WTC11 (cell line): ENCODE measurements at regions of chr13 and their contacts with region 1.

Region 1: DNA sequence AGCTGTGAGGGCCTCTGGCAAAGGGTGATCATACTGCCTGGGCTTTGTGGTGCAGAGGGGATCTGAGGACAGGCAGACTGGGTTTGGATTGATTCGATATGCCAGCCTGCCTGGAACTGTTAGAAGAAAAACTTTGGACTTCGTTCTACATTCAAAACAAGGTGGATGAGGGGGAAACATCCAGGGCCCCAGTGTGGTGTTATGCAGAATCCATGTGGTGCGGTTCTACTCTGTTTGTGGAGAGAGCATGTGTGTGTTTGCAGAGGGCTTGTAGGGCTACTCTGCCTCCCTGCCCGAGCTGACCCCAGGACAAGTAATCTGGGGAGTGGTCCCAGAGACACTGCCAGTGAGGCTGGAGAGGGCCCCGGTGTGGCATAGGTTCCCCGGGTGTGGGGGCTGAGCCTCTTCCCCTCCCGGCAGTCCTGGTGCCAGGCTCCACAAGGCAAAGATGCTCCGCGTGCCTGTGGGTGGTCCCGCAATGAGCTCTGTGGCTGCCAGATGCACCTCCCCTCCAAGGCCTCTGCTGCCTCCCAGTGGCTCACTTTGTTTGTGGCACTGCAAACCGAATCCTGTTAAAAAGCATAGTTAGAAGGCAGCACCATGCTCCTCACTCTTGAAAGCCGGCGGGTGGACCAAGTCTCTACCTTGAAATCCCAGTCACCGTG is 22.3 kb upstream of the TFDP1 start:
- DNase-seq: peak; percentile 88
- ATAC-seq: peak; percentile 92
- H3K4me3 Mint-ChIP-seq: no peak overlapping the region
- H3K27ac Mint-ChIP-seq: no peak overlapping the region
- H3K4me1 Mint-ChIP-seq: 0 out of 2 replicates have a peak, but pooled peaks cover 2% of the 10 kb centered on the region
- H3K27me3 Mint-ChIP-seq: no peaks in the 10 kb centered on the region
- CTCF ChIP-seq: peak; percentile 42; the same call in 1 of the 2 replicates

Region 2: GRCh38 chr13:113452942-113453901 is 109.0 kb before region 1 on chr13 and contains the start of gene ADPRHL1:
- CTCF ChIA-PET with region 1: interaction called, 29 read pairs
- POLR2A ChIA-PET with region 1: no interaction called
- DNase-seq: no peak
- ATAC-seq: no peak
- H3K4me3 Mint-ChIP-seq: no peak within 1 kb of the TSS
- H3K27ac Mint-ChIP-seq: peak within 1 kb of the TSS; percentile 80
- H3K4me1 Mint-ChIP-seq: peaks cover 5% of the 10 kb centered on the region; the same call in 1 of the 2 replicates
- H3K27me3 Mint-ChIP-seq: no peaks in the 10 kb centered on the region
- CTCF ChIP-seq: no peak
- total RNA-seq, gene ADPRHL1: 1.0 to 1.5 TPM (median 1.4 TPM) in 3 replicates

Region 3: GRCh38 chr13:113458253-113459065 is 103.8 kb before region 1 on chr13:
- CTCF ChIA-PET with region 1: interaction called, 29 read pairs
- POLR2A ChIA-PET with region 1: no interaction called
- DNase-seq: peak; percentile 42
- ATAC-seq: peak; percentile 55
- H3K4me3 Mint-ChIP-seq: no peak overlapping the region
- H3K27ac Mint-ChIP-seq: peak overlapping the region; percentile 87
- H3K4me1 Mint-ChIP-seq: no peaks in the 10 kb centered on the region
- H3K27me3 Mint-ChIP-seq: no peaks in the 10 kb centered on the region
- CTCF ChIP-seq: no peak

Region 4: GRCh38 chr13:113490496-113491417 is 71.5 kb before region 1 on chr13 and contains the start of gene DCUN1D2:
- CTCF ChIA-PET with region 1: interaction called, 17 read pairs
- POLR2A ChIA-PET with region 1: interaction called, 4 read pairs
- DNase-seq: peak; percentile 88
- ATAC-seq: peak; percentile 70
- H3K4me3 Mint-ChIP-seq: peak within 1 kb of the TSS; percentile 86
- H3K27ac Mint-ChIP-seq: peak within 1 kb of the TSS; percentile 77
- H3K4me1 Mint-ChIP-seq: peaks cover 75% of the 10 kb centered on the region
- H3K27me3 Mint-ChIP-seq: no peaks in the 10 kb centered on the region
- CTCF ChIP-seq: no peak
- total RNA-seq, gene DCUN1D2: 34.0 to 42.5 TPM (median 36.0 TPM) in 3 replicates

Region 5: GRCh38 chr13:113532156-113532806 is 29.9 kb before region 1 on chr13:
- CTCF ChIA-PET with region 1: interaction called, 29 read pairs
- POLR2A ChIA-PET with region 1: no interaction called
- DNase-seq: peak; percentile 70
- ATAC-seq: peak; percentile 96
- H3K4me3 Mint-ChIP-seq: no peak overlapping the region
- H3K27ac Mint-ChIP-seq: peak overlapping the region; percentile 95
- H3K4me1 Mint-ChIP-seq: peaks cover 18% of the 10 kb centered on the region
- H3K27me3 Mint-ChIP-seq: no peaks in the 10 kb centered on the region
- CTCF ChIP-seq: no peak

Region 6: GRCh38 chr13:113545455-113545930 is 16.7 kb before region 1 on chr13:
- CTCF ChIA-PET with region 1: interaction called, 15 read pairs
- POLR2A ChIA-PET with region 1: interaction called, 3 read pairs
- DNase-seq: no peak
- ATAC-seq: no peak
- H3K4me3 Mint-ChIP-seq: no peak overlapping the region
- H3K27ac Mint-ChIP-seq: peak overlapping the region; percentile 85
- H3K4me1 Mint-ChIP-seq: peaks cover 9% of the 10 kb centered on the region
- H3K27me3 Mint-ChIP-seq: no peaks in the 10 kb centered on the region
- CTCF ChIP-seq: no peak

Region 7: GRCh38 chr13:113732176-113732960 is 170.2 kb after region 1 on chr13:
- CTCF ChIA-PET with region 1: no interaction called
- POLR2A ChIA-PET with region 1: no interaction called
- DNase-seq: no peak
- ATAC-seq: no peak
- H3K4me3 Mint-ChIP-seq: no peak overlapping the region
- H3K27ac Mint-ChIP-seq: no peak overlapping the region
- H3K4me1 Mint-ChIP-seq: no peaks in the 10 kb centered on the region
- H3K27me3 Mint-ChIP-seq: peaks cover 24% of the 10 kb centered on the region
- CTCF ChIP-seq: no peak